Ascending aorta (tissue), 2 donors: ENCODE measurements at regions of chr1 and their contacts with region 1.

Region 1: GRCh38 chr1:22976461-22977243 is 4.0 kb upstream of the LACTBL1 start:
- DNase-seq: peak in 1 of 2 donors; percentile 70
- H3K4me3 ChIP-seq: no peak overlapping the region
- H3K27ac ChIP-seq: no peak overlapping the region
- H3K4me1 ChIP-seq: no peaks in the 10 kb centered on the region
- H3K27me3 ChIP-seq: no peaks in the 10 kb centered on the region
- CTCF ChIP-seq: peak in 2 of 3 experiments; percentile 61 to 62

Region 2: DNA sequence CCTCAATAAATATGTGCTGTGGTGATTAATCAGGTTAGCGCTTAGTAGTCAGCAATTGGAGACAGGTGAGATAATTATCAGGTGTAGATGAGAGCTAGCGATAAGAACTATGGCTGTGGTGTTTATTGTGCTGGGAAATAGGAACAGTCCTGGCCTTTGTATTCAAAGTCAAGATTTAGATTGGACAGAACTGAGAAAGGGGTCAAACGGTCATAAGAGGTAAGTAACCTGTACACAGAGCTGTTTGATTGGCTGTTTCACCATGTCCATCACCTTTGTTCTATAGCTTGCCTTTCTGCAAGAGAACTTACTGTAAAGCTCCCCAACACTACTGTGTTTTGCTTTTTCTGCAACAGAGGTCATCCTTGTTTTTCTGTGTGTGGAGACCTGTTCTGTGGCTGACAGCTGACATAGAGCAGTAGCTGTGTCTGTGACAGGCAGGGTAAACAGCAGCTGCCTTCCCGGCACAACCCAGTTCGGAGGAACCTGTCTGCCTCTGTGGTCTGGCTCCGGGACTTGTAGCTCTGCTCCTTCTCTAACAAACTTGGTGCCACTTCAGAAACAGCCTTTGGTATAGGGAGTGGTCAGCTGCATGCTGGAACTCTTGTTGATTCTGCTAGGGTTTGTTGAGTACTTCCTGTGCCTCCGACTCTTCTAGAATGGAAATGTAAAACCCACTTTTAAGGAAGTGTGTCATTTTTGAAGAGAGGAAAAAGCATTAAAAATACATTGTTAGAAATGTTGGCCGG is 945.3 kb before region 1 on chr1:
- intact Hi-C with region 1: no loop called
- DNase-seq: no peak
- H3K4me3 ChIP-seq: no peak overlapping the region
- H3K27ac ChIP-seq: no peak overlapping the region
- H3K4me1 ChIP-seq: peaks cover 0 to under 1% of the 10 kb centered on the region in 2 donors
- H3K27me3 ChIP-seq: no peaks in the 10 kb centered on the region
- CTCF ChIP-seq: no peak

Region 3: DNA sequence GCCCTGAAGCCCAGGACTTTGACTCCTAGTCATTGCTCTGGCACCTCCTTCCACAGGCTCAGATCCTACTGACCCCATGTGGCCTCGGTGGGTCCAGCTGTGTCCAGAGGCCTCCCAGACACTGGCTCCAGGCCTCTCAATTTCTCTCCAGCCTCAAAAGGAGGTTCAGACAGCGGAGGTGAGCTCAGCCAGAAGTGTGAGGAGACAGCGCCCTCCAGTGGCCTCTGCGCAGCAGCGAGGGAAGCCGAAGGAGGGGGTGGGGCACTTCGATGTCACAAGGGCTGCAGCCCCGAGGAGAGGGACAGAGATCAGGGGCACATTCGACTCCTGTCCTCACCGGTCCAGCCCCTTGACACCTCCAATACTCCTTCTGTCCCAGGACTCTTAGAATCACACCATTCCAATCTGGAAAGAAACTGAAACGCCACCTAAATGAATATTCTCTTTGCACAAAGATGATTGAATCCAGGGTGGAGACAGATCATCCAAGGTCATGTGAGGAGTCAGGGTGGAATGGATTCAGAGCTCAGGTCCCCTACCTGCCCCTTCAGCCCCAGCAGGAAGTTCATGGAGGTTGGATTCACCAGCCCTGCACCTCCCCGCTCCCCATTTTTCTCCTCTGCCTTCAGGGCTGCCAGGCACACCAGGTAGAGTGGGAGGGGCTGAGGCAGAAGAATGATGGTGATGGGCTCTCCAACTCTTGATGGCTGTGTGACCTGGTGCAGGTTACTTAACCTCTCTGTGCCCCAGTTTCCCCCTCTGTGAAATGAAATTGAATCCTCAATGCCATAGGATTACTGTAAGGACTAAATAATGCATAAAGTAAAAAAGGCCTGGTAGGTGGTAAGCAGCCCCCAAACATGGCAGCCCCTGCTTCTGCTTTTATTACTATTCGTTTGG is 559.8 kb before region 1 on chr1:
- intact Hi-C with region 1: no loop called
- DNase-seq: peak in 1 of 2 donors; percentile 63
- H3K4me3 ChIP-seq: no peak overlapping the region
- H3K27ac ChIP-seq: no peak overlapping the region
- H3K4me1 ChIP-seq: no peaks in the 10 kb centered on the region
- H3K27me3 ChIP-seq: no peaks in the 10 kb centered on the region
- CTCF ChIP-seq: peak; percentile 50 to 67 (median 63)

Region 4: GRCh38 chr1:23092447-23092846 is 115.8 kb after region 1 on chr1:
- intact Hi-C with region 1: no loop called
- DNase-seq: no peak
- H3K4me3 ChIP-seq: no peak overlapping the region
- H3K27ac ChIP-seq: no peak overlapping the region
- H3K4me1 ChIP-seq: no peaks in the 10 kb centered on the region
- H3K27me3 ChIP-seq: no peaks in the 10 kb centered on the region
- CTCF ChIP-seq: no peak

Region 5: DNA sequence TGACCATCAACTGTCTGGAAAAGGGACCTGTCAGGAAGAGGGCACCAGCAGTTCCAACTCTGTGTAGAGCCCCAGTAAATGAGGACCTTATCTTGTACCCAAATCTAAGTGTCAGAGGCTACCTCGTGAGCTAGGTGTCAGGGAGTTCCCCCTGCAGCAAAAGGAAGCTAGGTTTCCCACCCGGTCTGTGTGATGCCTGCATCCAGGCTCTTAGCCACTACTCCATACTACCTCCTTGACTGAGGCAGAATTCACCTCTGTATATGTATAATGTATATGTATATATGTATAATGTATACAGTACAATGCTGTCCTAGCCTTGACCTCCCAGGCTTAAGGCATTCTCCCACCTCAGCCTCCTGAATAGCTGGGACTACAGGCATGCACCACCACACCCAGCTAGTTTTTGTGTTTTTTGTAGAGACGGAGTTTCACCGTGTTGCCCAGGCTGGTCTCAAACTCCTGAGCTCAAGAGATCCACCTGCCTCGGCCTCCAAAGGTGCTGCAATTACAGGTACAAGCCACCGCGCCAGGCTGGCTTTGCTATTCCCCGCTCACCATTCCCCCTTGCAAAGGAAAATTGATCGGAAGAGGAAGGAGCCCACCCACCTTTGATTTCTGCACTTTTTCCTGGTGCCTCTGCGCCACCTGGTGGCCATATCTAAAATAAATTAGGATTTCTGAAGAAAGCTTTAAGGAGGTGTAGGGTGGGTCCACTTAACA is 207.7 kb after region 1 on chr1:
- intact Hi-C with region 1: loop called (anchors 5 kb)
- DNase-seq: no peak
- H3K4me3 ChIP-seq: peak overlapping the region; percentile 45 to 50
- H3K27ac ChIP-seq: no peak overlapping the region
- H3K4me1 ChIP-seq: peaks cover 0 to 3% of the 10 kb centered on the region in 2 donors
- H3K27me3 ChIP-seq: no peaks in the 10 kb centered on the region
- CTCF ChIP-seq: peak; percentile 64 to 94 (median 92)